H1 (cell line): ENCODE measurements at regions of chr5 and their contacts with region 1.

Region 1: GRCh38 chr5:171405601-171406005 is 13.8 kb upstream of the FGF18 start:
- DNase-seq: no peak
- H3K4me3 ChIP-seq: no peak overlapping the region
- H3K27ac ChIP-seq: no peak overlapping the region
- H3K4me1 ChIP-seq: no peaks in the 10 kb centered on the region
- H3K27me3 ChIP-seq: no peaks in the 10 kb centered on the region
- CTCF ChIP-seq: peak in 2 of 3 experiments; percentile 2 to 28; a peak in 1 of 4 replicates
- EP300 ChIP-seq: no peak
- POLR2A ChIP-seq: no peak
- RAD21 ChIP-seq: no peak

Region 2: GRCh38 chr5:171387345-171387969 is 18.1 kb before region 1 on chr5 and contains the start of gene NPM1:
- CTCF ChIA-PET with region 1: interaction called, 8 read pairs
- POLR2A ChIA-PET with region 1: interaction called, 626 read pairs
- DNase-seq: peak; percentile 95 to 99
- H3K4me3 ChIP-seq: peak within 1 kb of the TSS; percentile 89 to 97 (median 92)
- H3K27ac ChIP-seq: peak within 1 kb of the TSS; percentile 96
- H3K4me1 ChIP-seq: peaks cover 3 to 13% (median 5%) of the 10 kb centered on the region in 4 experiments; a peak in 6 of 7 replicates
- H3K27me3 ChIP-seq: no peaks in the 10 kb centered on the region
- CTCF ChIP-seq: no peak
- EP300 ChIP-seq: peak in 1 of 2 experiments; percentile 30; a peak in 1 of 3 replicates
- POLR2A ChIP-seq: peak; percentile 97 to 98
- RAD21 ChIP-seq: no peak
- total RNA-seq, gene NPM1: 4,042 and 4,211 TPM in 2 replicates

Region 3: GRCh38 chr5:171437286-171437821 is 31.8 kb after region 1 on chr5:
- CTCF ChIA-PET with region 1: no interaction called
- POLR2A ChIA-PET with region 1: no interaction called
- DNase-seq: no peak
- H3K4me3 ChIP-seq: peak overlapping the region in 1 of 4 experiments; percentile 1; a peak in 2 of 8 replicates
- H3K27ac ChIP-seq: no peak overlapping the region
- H3K4me1 ChIP-seq: peaks cover 0 to 38% (median 23%) of the 10 kb centered on the region in 4 experiments; a peak in 6 of 7 replicates
- H3K27me3 ChIP-seq: no peaks in the 10 kb centered on the region
- CTCF ChIP-seq: peak in 1 of 3 experiments; percentile 14; a peak in 1 of 4 replicates
- EP300 ChIP-seq: no peak
- POLR2A ChIP-seq: no peak
- RAD21 ChIP-seq: peak in 1 of 2 experiments; percentile 2; a peak in 2 of 4 replicates